Natural killer cell (primary cell): ENCODE measurements at regions of chr1 and their contacts with region 1.

Region 1: DNA sequence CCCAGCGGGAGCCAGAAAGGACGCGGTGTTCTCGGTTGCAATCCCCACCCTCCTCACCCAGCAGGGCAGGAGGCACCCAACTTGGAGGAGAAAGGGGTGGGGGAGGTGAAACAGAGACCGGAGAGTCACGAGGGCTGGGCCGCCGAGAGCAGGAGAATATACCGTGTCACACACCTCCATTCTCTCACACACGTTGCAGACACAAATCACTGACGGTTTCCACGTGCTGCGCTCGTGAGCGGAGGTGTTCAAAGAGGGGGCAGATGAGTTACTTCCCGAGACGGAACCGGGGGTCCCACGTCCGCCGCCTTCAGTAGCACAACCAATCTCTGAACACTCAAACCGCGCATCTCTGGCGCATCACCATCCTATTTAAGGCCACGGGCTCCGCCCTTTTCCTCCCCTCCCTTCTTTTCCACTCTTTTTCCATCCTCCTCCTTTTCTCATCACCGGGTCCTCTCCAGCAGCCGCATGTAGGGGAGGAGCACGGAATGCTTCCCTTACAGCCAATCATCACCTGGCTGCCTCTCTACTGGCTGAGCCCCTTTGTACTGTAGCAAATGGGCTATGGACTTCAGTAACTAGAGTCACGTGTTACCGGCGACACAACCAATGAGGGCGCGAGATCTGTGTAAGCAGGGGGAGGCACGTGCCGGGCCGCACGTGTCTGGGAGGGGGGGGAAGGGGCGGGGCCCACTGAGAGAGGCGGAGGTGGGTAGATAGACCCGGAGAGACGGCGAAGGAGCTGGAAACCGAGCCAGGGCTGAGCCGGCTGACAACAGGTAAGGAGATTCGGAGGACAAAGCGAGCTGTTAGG is at the start of gene CIART:
- DNase-seq: peak; percentile 55 to 91
- ATAC-seq: peak; percentile 84 to 92 (median 90)
- H3K4me3 ChIP-seq: peak within 1 kb of the TSS; percentile 46
- H3K4me3 Mint-ChIP-seq: peak within 1 kb of the TSS; percentile 91
- H3K27ac ChIP-seq: no peak within 1 kb of the TSS
- H3K27ac Mint-ChIP-seq: peak within 1 kb of the TSS; percentile 59 to 83
- H3K4me1 ChIP-seq: peaks cover 22% of the 10 kb centered on the region
- H3K4me1 Mint-ChIP-seq: peaks cover 18 to 23% of the 10 kb centered on the region in 2 donors
- H3K27me3 ChIP-seq: no peaks in the 10 kb centered on the region
- H3K27me3 Mint-ChIP-seq: peaks cover 8 to 26% of the 10 kb centered on the region in 2 donors
- CTCF ChIP-seq: no peak
- total RNA-seq, gene CIART: 0.33 to 2.4 (median 1.9) TPM

Region 2: GRCh38 chr1:150262388-150263320 is 19.4 kb before region 1 on chr1:
- intact Hi-C with region 1: no loop called
- DNase-seq: no peak
- ATAC-seq: no peak
- H3K4me3 ChIP-seq: no peak overlapping the region
- H3K4me3 Mint-ChIP-seq: no peak overlapping the region
- H3K27ac ChIP-seq: no peak overlapping the region
- H3K27ac Mint-ChIP-seq: no peak overlapping the region
- H3K4me1 ChIP-seq: peaks cover 7% of the 10 kb centered on the region
- H3K4me1 Mint-ChIP-seq: peaks cover 2 to 10% of the 10 kb centered on the region in 2 donors
- H3K27me3 ChIP-seq: peaks cover 21% of the 10 kb centered on the region
- H3K27me3 Mint-ChIP-seq: peaks cover 16 to 18% of the 10 kb centered on the region in 2 donors
- CTCF ChIP-seq: no peak

Region 3: DNA sequence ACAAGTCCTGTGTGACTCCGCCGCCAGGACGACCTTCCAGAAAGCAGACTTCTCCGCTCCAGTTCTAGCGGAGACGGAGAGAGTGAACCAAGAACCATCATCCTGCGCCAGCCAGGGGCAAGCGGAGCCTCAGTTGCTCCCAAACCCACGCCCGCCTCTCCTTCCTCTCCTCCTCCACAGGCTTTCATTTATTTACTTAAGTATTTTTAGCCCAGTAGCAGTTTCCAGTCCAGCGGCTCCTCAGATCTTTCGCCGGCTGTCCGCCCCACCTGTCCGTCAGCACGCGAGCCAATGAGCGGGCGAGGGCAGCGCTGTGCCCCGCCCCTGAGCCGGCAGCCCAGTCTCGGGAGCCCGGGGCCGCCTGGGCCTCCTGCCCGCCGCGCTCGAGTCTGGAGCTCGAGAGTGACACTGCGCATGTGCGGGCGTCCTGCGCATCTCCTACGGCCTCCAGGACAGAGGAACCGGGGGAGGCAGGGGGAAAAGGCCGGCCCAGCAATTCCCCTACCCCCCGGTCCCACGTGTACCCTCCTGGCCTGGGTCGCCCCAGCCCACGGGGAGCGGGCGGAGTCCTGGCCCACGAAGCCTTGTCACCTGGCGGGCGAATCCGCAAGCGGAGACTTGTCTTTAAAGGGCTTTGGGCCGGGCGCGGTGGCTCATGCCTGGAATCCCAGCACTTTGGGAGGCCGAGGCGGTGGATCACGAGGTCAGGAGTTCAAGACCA is 233.4 kb after region 1 on chr1 and contains the start of gene FALEC:
- intact Hi-C with region 1: loop called (anchors 1 kb)
- DNase-seq: peak; percentile 89 to 95
- ATAC-seq: peak; percentile 99 to 100 (median 100)
- H3K4me3 ChIP-seq: peak within 1 kb of the TSS; percentile 91
- H3K4me3 Mint-ChIP-seq: peak within 1 kb of the TSS; percentile 93
- H3K27ac ChIP-seq: peak within 1 kb of the TSS; percentile 60
- H3K27ac Mint-ChIP-seq: peak within 1 kb of the TSS; percentile 62 to 77
- H3K4me1 ChIP-seq: peaks cover 16% of the 10 kb centered on the region
- H3K4me1 Mint-ChIP-seq: peaks cover 8 to 22% of the 10 kb centered on the region in 2 donors
- H3K27me3 ChIP-seq: no peaks in the 10 kb centered on the region
- H3K27me3 Mint-ChIP-seq: no peaks in the 10 kb centered on the region
- CTCF ChIP-seq: no peak
- total RNA-seq, gene FALEC: not detected